Sigmoid colon (tissue), 7 donors: ENCODE measurements at regions of chr9 and their contacts with region 1.

Region 1: GRCh38 chr9:18605766-18606180 is 131.8 kb downstream of the ADAMTSL1 start:
- DNase-seq: peak; percentile 73
- H3K4me3 ChIP-seq: no peak overlapping the region
- H3K27ac ChIP-seq: peak overlapping the region; percentile 37 to 50 (median 46)
- H3K4me1 ChIP-seq: peaks cover 0 to 33% (median 26%) of the 10 kb centered on the region in 4 donors
- H3K27me3 ChIP-seq: no peaks in the 10 kb centered on the region
- CTCF ChIP-seq: no peak
- EP300 ChIP-seq: no peak
- POLR2A ChIP-seq: no peak

Region 2: DNA sequence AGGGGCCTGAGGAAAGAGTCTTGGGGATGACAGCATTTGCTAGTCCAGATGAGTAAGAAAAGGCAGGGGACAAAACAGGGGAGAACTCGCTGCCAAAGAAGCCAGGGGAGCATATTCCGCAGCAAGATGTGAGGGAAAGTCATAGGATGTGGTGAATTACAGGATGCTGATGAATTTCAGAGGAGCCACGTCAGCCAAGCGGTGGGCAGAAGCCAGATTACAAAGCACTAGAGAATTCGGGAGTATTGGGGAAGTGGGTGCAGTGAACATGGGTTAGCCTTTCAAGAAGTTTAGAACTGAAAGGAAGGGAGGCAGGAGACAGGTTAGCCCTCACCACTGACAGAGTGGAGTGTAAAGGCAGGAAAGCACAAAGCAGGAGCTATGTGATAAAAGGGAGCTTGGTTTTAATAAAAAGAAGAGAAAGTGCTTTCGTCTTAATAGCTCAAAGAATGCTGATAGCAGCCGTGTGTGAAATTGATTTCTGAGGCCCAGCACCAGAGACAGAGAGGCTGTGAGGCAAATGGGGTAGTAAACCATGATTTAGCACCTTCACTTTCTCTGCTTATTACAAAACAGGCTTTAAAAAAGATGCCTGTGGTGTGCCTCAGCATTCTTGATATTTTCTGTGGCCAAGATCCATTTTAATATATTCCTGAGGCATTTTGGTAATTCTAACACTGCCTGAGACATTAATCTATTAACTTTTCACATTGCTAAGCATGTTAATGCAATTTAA is 115.0 kb before region 1 on chr9:
- intact Hi-C with region 1: loop called (anchors 10 kb)
- DNase-seq: no peak
- H3K4me3 ChIP-seq: peak overlapping the region in 1 of 4 donors; percentile 9
- H3K27ac ChIP-seq: peak overlapping the region; percentile 16 to 70 (median 39)
- H3K4me1 ChIP-seq: peaks cover 0 to 20% (median 15%) of the 10 kb centered on the region in 4 donors
- H3K27me3 ChIP-seq: no peaks in the 10 kb centered on the region
- CTCF ChIP-seq: no peak
- EP300 ChIP-seq: no peak
- POLR2A ChIP-seq: no peak

Region 3: GRCh38 chr9:18726546-18726945 is 120.8 kb after region 1 on chr9:
- intact Hi-C with region 1: no loop called
- DNase-seq: no peak
- H3K4me3 ChIP-seq: no peak overlapping the region
- H3K27ac ChIP-seq: peak overlapping the region in 3 of 4 donors; percentile 41 to 67 (median 62)
- H3K4me1 ChIP-seq: peaks cover 0 to 29% (median 24%) of the 10 kb centered on the region in 4 donors
- H3K27me3 ChIP-seq: no peaks in the 10 kb centered on the region
- CTCF ChIP-seq: no peak
- EP300 ChIP-seq: no peak
- POLR2A ChIP-seq: no peak